ENCODE measurements at regions of chr20 and their contacts with region 1.

Region 1: GRCh38 chr20:22339091-22339881 is 245.1 kb downstream of the FOXA2 start:
- DNase-seq: no peak
- H3K4me3 ChIP-seq: no peak overlapping the region
- H3K27ac ChIP-seq: no peak overlapping the region
- H3K4me1 ChIP-seq: no peaks in the 10 kb centered on the region
- H3K27me3 ChIP-seq: peaks cover 0 to 20% (median 0%) of the 10 kb centered on the region in 3 donors
- CTCF ChIP-seq: peak; percentile 31 to 75 (median 68)
- EP300 ChIP-seq: no peak
- POLR2A ChIP-seq: no peak

Region 2: DNA sequence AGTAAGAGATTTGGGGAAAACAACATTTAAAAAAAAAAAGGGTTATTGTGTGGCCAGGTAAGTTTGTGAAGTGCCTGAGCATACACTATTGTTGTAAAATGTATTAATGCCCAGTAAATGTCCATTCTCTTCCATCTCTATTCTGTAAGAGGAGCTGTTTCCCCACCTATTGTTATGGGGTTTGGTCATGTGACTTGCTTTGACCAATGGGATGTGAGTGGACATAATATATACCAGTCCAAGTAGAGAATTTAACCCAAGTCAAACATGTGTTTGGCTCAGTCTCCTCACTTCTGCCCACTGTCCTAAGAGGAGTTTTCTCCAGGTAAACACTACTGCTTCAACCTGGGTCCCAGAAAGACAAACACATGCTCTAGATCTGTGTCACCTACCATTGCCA is 132.0 kb before region 1 on chr20:
- intact Hi-C with region 1: no loop called
- DNase-seq: no peak
- H3K4me3 ChIP-seq: no peak overlapping the region
- H3K27ac ChIP-seq: no peak overlapping the region
- H3K4me1 ChIP-seq: no peaks in the 10 kb centered on the region
- H3K27me3 ChIP-seq: no peaks in the 10 kb centered on the region
- CTCF ChIP-seq: no peak
- EP300 ChIP-seq: no peak
- POLR2A ChIP-seq: no peak

Region 3: DNA sequence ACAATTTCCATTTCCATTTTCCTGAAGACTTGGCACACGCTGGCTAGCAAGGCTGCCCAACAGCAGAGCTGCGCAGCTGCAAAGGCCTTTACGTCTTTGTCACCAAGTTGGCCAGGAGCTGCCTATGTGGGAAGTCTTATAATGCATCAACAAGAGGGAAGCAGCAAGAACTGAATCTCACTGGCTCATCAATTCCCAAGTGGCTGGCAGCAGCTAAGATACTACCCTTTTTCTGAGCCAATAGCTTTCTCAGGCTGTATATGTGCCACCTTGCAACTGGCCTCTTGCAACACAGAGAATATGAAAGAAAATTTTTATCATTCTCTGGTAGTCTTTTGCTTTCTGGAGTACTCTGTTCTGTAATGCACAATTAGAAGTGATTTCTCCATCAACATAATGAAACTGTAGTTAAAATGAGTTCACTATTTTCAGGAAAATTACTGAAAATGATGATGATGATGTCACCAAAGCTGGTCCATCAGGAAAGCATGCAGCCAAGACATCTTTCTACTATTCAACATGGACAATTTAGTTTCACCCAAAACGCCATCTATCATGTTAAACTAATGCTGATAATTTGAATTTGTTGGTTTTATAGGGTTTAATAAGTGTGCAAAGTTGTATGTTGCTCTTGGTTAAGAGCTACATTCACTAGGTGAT is 342.4 kb after region 1 on chr20:
- intact Hi-C with region 1: loop called (anchors 2 kb)
- DNase-seq: no peak
- H3K4me3 ChIP-seq: no peak overlapping the region
- H3K27ac ChIP-seq: no peak overlapping the region
- H3K4me1 ChIP-seq: no peaks in the 10 kb centered on the region
- H3K27me3 ChIP-seq: peaks cover 0 to 19% (median 0%) of the 10 kb centered on the region in 3 donors
- CTCF ChIP-seq: no peak
- EP300 ChIP-seq: no peak
- POLR2A ChIP-seq: no peak

Measured in sigmoid colon (tissue), 7 donors.